HEK293 (cell line): ENCODE measurements at regions of chr14 and their contacts with region 1.

Region 1: GRCh38 chr14:52961060-52961639 is 10.3 kb upstream of the FERMT2 start:
- H3K4me3 ChIP-seq: no peak overlapping the region
- H3K27ac ChIP-seq: no peak overlapping the region
- H3K4me1 ChIP-seq: no peaks in the 10 kb centered on the region
- CTCF ChIP-seq: peak; percentile 28; the same call in 1 of the 2 replicates

Region 2: GRCh38 chr14:52790756-52791202 is 170.4 kb before region 1 on chr14:
- CTCF ChIA-PET with region 1: no interaction called
- POLR2A ChIA-PET with region 1: no interaction called
- H3K4me3 ChIP-seq: peak overlapping the region; percentile 88
- H3K27ac ChIP-seq: peak overlapping the region; percentile 92
- H3K4me1 ChIP-seq: 0 out of 2 replicates have a peak, but pooled peaks cover 3% of the 10 kb centered on the region
- CTCF ChIP-seq: no peak

Region 3: GRCh38 chr14:52824507-52824906 is 136.6 kb before region 1 on chr14:
- CTCF ChIA-PET with region 1: interaction called, 29 read pairs
- POLR2A ChIA-PET with region 1: interaction called, 3 read pairs
- H3K4me3 ChIP-seq: no peak overlapping the region
- H3K27ac ChIP-seq: no peak overlapping the region
- H3K4me1 ChIP-seq: no peaks in the 10 kb centered on the region
- CTCF ChIP-seq: no peak

Region 4: DNA sequence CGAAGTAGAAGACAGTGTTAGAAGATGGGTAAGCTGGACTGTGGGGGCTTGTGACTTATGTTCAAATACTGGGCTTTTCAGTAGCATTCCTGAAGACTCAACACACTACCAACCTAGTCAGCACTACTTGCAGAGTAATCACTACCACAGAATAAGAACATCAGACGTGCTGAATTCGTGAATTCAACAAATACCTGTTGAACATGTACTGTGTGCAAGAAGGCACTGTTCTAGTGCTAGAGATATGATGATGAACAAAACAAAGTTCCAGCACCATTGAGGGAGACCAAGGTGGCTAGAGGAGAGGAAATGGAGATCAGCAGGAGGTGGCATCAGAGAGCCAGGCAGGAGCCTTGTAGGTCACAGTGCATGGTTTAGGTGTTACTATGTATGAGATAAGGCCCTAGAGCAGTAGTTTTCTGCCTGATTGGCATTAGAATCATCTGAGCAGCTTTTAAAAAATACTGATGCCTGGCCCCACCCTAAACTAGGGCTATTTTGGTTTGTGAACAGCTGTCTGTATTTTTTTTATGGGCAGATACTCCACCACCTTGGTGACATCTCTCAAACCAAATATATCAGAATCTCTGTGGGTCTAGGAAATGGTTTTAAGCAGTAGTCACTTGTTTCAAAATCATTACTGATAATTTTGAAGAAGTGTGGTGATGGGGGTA is 37.1 kb before region 1 on chr14:
- CTCF ChIA-PET with region 1: interaction called, 25 read pairs
- POLR2A ChIA-PET with region 1: no interaction called
- H3K4me3 ChIP-seq: no peak overlapping the region
- H3K27ac ChIP-seq: no peak overlapping the region
- H3K4me1 ChIP-seq: peaks cover 59% of the 10 kb centered on the region
- CTCF ChIP-seq: peak; percentile 37; the same call in 1 of the 2 replicates

Region 5: GRCh38 chr14:52950898-52951689 is 10.1 kb before region 1 on chr14 and contains the start of gene FERMT2:
- CTCF ChIA-PET with region 1: interaction called, 5 read pairs
- POLR2A ChIA-PET with region 1: interaction called, 10 read pairs
- H3K4me3 ChIP-seq: peak within 1 kb of the TSS; percentile 96
- H3K27ac ChIP-seq: peak within 1 kb of the TSS; percentile 98
- H3K4me1 ChIP-seq: peaks cover 17% of the 10 kb centered on the region; the same call in 1 of the 2 replicates
- CTCF ChIP-seq: peak; percentile 39